ENCODE measurements at regions of chr6 and their contacts with region 1.

Region 1: DNA sequence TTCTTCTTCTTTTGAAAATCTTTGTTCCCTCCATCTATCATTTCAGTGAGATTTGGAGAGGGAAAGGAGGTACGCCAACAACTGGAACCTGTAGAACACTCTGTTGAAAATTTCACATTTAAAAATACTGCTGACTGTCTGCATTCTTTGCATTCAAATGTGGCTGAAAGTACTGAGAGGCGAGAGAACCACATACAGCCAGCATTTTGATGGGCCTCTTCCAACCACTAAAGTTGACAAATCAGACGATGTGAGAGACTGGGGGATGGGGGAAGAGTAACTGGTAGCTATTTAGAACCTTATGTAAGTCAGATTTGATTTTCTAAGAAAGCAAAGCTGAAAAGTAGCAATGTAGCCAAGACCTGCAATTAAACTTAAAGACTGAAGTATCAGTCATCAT is 77.5 kb downstream of the FKBP5 start:
- DNase-seq: peak; percentile 36 to 46 (median 43)
- H3K4me3 ChIP-seq: no peak overlapping the region
- H3K4me3 Mint-ChIP-seq: peak overlapping the region in 7 of 8 donors; percentile 13 to 80 (median 63)
- H3K27ac ChIP-seq: peak overlapping the region; percentile 8
- H3K27ac Mint-ChIP-seq: peak overlapping the region; percentile 67 to 93 (median 80)
- H3K4me1 ChIP-seq: peaks cover 46% of the 10 kb centered on the region
- H3K4me1 Mint-ChIP-seq: peaks cover 43 to 88% (median 59%) of the 10 kb centered on the region in 4 donors
- H3K27me3 ChIP-seq: no peaks in the 10 kb centered on the region
- H3K27me3 Mint-ChIP-seq: no peaks in the 10 kb centered on the region

Region 2: GRCh38 chr6:35516642-35517041 is 94.6 kb before region 1 on chr6:
- CTCF ChIA-PET with region 1: no interaction called
- POLR2A ChIA-PET with region 1: no interaction called
- intact Hi-C with region 1: no loop called
- DNase-seq: no peak
- H3K4me3 ChIP-seq: no peak overlapping the region
- H3K4me3 Mint-ChIP-seq: no peak overlapping the region
- H3K27ac ChIP-seq: no peak overlapping the region
- H3K27ac Mint-ChIP-seq: no peak overlapping the region
- H3K4me1 ChIP-seq: no peaks in the 10 kb centered on the region
- H3K4me1 Mint-ChIP-seq: peaks cover 0 to 4% (median 0%) of the 10 kb centered on the region in 4 donors
- H3K27me3 ChIP-seq: no peaks in the 10 kb centered on the region
- H3K27me3 Mint-ChIP-seq: no peaks in the 10 kb centered on the region

Region 3: DNA sequence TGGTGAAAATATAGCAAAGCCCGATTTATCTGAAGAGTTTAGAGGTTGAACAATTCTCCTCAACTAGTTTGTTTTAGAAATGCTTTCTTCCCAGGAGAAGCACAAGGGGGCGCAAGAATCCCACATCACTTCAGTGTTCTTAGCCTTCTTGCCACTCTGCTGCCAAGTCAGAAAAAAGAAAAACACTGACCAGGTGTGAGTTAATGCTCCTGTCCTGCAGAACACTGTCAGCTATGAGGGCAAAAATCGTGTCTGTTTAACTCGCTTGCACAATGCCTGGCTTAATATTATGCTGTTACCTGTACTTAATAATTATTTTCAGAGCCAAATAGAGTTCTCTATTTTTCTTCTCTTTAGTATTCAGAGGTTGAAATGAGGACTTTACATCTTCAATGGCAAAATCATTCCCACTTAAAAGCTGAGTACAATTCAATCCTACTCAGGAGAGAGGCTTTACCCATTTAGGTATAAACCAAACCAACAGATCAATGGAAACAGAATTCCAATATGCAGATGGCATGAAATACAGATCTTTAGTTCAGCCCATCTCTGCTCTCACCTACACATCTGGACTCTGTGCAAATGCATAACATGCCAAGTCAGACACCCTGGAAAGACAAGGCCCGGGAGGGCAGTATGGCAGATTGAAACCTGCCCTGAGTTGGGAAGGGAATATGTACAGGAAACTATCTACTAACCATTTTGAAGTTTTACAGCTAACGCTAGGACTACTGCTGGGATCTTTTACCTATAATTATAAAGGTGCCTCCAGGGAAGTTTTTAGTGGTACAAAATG is 27.1 kb before region 1 on chr6:
- CTCF ChIA-PET with region 1: interaction called, 490 read pairs
- POLR2A ChIA-PET with region 1: interaction called, 268 read pairs
- intact Hi-C with region 1: no loop called
- DNase-seq: peak; percentile 73 to 78 (median 76)
- H3K4me3 ChIP-seq: no peak overlapping the region
- H3K4me3 Mint-ChIP-seq: peak overlapping the region in 5 of 8 donors; percentile 17 to 63 (median 46)
- H3K27ac ChIP-seq: peak overlapping the region; percentile 12
- H3K27ac Mint-ChIP-seq: peak overlapping the region; percentile 39 to 89 (median 83)
- H3K4me1 ChIP-seq: peaks cover 45% of the 10 kb centered on the region
- H3K4me1 Mint-ChIP-seq: peaks cover 47 to 59% (median 50%) of the 10 kb centered on the region in 4 donors
- H3K27me3 ChIP-seq: no peaks in the 10 kb centered on the region
- H3K27me3 Mint-ChIP-seq: no peaks in the 10 kb centered on the region

Measured in CD4-positive, alpha-beta memory T cell (primary cell).